ENCODE measurements at regions of chr15 and their contacts with region 1.

Region 1: DNA sequence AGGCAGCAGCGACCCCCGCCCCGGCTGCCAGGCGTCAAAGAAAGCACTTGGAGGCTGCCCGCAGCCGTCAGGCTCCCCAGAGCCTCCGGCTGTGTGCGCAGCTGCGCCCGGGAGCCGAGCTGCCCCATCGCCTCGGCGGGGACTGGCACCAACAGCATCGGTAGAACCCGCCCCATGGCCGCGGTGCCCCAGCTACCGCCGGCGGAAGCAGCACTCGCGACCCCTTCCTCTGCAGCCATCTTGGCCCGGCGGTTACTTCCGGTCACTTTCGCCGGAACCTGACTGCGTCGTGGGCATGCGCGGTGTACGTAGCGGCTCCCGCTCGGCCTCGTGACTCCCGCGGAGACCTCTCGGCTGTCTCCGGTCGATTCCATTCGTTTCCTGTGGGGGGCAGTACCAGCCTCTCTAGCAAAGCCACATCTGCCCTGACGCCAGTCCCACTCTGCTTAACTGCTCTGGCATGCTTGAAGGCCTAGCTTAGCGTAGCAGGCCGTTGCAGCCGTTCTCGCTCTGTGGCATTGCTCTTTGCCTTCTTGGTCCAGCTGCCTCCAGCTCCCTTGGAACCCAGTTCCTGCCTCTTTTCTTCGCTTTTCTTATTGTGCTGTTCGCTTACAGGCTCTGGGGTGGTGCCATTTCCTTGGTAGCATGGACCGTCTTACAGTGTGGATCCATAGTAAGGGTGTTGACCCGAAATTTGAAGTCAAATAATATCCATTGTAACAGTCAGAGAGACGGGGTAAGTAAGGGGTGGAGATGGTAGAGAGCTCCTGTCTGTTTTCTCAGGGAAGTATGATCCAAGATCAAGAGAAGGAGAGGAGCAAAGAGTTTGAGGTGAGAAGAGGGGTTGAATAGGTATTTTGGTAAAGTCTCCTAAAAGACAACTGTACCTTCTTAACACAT is at the start of gene SPG11:
- DNase-seq: peak; percentile 92
- H3K4me3 ChIP-seq: peak within 1 kb of the TSS; percentile 97
- H3K27me3 ChIP-seq: no peaks in the 10 kb centered on the region; the same call in 1 of the 2 replicates
- CTCF ChIP-seq: peak; percentile 86
- polyA plus RNA-seq, gene SPG11: 40.7 and 60.6 TPM in 2 replicates

Region 2: DNA sequence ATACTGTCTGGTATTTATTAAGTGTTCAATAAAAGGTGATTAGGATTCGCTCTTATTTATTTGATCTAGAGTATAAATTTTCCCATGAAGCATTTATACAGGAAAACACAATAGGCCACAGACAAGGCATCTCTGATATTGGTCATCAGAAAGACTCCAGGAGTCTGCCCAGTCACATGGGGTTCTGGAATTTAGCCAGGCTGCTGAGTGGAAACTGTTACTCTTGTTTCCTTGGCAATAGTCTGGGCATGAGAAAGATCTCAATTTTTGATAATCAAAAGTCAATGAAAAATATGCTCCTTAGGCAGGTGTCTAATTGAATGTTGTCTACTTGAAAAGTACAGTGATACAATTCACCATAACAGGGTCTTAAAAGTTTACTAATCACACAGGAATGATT is 629.8 kb before region 1 on chr15:
- CTCF ChIA-PET with region 1: no interaction called
- POLR2A ChIA-PET with region 1: no interaction called
- DNase-seq: no peak
- H3K4me3 ChIP-seq: no peak overlapping the region
- H3K27me3 ChIP-seq: no peaks in the 10 kb centered on the region
- CTCF ChIP-seq: no peak

Region 3: DNA sequence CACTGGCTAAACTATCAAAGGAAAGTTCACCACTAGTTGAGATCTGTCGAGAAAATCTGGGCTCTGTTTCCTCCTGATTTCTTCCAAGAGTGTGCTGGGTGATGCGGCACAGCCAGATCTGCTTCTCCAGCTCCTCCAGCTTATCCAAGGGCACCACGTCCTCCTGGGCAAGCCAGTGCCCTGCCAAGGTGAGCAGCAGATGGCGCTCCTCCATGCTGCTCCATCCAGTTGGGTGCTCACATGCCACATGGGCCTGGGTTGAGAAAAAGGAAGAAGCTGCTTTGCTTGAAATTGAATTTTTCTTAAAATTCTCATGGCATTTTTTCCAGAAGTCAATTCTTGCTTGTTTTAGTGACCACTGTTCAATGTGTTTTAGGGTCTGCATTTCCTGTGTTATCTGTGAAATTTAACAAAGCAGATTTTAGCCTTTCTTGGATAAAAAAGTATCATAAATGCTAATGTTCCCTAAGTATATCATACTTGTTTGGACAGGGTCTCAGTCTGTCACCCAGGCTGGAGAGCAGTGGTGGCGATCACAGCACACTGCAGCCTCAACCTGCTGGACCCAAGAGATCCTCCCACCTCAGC is 79.4 kb before region 1 on chr15:
- CTCF ChIA-PET with region 1: interaction called, 11 read pairs
- POLR2A ChIA-PET with region 1: no interaction called
- DNase-seq: no peak
- H3K4me3 ChIP-seq: no peak overlapping the region
- H3K27me3 ChIP-seq: no peaks in the 10 kb centered on the region
- CTCF ChIP-seq: peak; percentile 51

Region 4: GRCh38 chr15:44682211-44682610 is 18.6 kb after region 1 on chr15:
- CTCF ChIA-PET with region 1: interaction called, 13 read pairs
- POLR2A ChIA-PET with region 1: no interaction called
- DNase-seq: no peak
- H3K4me3 ChIP-seq: no peak overlapping the region
- H3K27me3 ChIP-seq: peaks cover 12% of the 10 kb centered on the region
- CTCF ChIP-seq: no peak

Region 5: GRCh38 chr15:44711356-44712107 is 47.9 kb after region 1 on chr15 and contains the start of gene B2M:
- CTCF ChIA-PET with region 1: interaction called, 17 read pairs
- POLR2A ChIA-PET with region 1: no interaction called
- DNase-seq: peak; percentile 77
- H3K4me3 ChIP-seq: peak within 1 kb of the TSS; percentile 98
- H3K27me3 ChIP-seq: no peaks in the 10 kb centered on the region
- CTCF ChIP-seq: no peak
- polyA plus RNA-seq, gene B2M: 2,480 and 4,424 TPM in 2 replicates

Region 6: GRCh38 chr15:44728576-44729407 is 65.1 kb after region 1 on chr15:
- CTCF ChIA-PET with region 1: interaction called, 26 read pairs
- POLR2A ChIA-PET with region 1: interaction called, 3 read pairs
- DNase-seq: peak; percentile 98
- H3K4me3 ChIP-seq: peak overlapping the region; percentile 68
- H3K27me3 ChIP-seq: no peaks in the 10 kb centered on the region
- CTCF ChIP-seq: no peak

Region 7: GRCh38 chr15:44738340-44738984 is 74.8 kb after region 1 on chr15:
- CTCF ChIA-PET with region 1: interaction called, 55 read pairs
- POLR2A ChIA-PET with region 1: no interaction called
- DNase-seq: peak; percentile 12
- H3K4me3 ChIP-seq: no peak overlapping the region
- H3K27me3 ChIP-seq: no peaks in the 10 kb centered on the region
- CTCF ChIP-seq: peak; percentile 70

Region 8: DNA sequence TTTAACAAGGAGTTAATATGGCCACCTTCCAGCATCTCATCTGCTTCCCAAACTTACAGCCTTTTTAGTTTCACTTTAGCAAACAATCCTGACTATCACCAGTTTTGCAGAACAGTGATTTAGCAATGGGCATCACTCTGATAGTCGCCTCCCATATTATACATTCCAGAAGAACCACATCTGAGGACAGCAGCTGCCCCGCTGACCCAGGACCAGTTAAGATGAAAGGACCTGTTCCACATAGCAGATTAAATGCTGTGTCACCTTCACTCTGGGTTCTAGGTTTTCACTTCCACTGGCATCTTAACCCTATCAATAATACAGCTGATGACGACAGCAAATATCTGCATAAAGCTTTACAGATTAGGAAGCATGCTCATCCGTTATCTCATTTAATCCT is 172.4 kb after region 1 on chr15:
- CTCF ChIA-PET with region 1: no interaction called
- POLR2A ChIA-PET with region 1: no interaction called
- DNase-seq: no peak
- H3K4me3 ChIP-seq: no peak overlapping the region
- H3K27me3 ChIP-seq: no peaks in the 10 kb centered on the region
- CTCF ChIP-seq: no peak